ENCODE measurements at regions of chr13 and their contacts with region 1.

Region 1: DNA sequence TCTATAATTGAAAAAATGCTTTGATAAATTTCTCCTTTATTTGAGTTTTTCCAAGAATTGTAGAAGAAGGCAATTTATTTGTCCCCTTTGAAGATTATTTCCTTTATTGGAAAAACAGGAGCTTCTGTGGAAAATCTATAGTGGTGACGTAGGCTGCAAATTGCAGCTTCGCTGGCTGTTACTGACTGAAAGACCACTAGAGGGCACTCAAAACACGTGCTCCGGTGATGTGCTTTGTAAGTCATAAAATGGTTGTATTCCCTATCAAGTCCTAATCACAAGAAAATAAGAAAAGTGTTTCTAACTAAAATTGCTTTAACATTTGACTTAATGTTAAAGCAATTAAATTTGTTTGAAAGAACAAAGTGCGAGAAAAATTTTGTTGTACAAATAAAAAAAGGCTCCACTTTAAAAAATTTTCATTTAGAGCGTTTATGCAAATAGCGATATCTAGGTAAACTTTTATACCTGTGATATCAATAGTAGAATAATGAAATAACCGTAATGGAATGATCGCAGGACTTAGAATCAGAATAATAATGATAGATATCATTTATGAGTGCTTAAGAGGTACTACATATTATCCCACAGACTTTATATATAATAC is 638.2 kb upstream of the SPRY2 start:
- DNase-seq: peak in 9 of 10 donors; percentile 25 to 69 (median 50)
- H3K4me3 ChIP-seq: no peak overlapping the region
- H3K27ac ChIP-seq: no peak overlapping the region
- H3K27me3 ChIP-seq: no peaks in the 10 kb centered on the region
- CTCF ChIP-seq: peak; percentile 61 to 98 (median 84)

Region 2: GRCh38 chr13:80873589-80873988 is 105.5 kb before region 1 on chr13:
- intact Hi-C with region 1: no loop called
- DNase-seq: no peak
- H3K4me3 ChIP-seq: no peak overlapping the region
- H3K27ac ChIP-seq: no peak overlapping the region
- H3K27me3 ChIP-seq: no peaks in the 10 kb centered on the region
- CTCF ChIP-seq: no peak

Region 3: DNA sequence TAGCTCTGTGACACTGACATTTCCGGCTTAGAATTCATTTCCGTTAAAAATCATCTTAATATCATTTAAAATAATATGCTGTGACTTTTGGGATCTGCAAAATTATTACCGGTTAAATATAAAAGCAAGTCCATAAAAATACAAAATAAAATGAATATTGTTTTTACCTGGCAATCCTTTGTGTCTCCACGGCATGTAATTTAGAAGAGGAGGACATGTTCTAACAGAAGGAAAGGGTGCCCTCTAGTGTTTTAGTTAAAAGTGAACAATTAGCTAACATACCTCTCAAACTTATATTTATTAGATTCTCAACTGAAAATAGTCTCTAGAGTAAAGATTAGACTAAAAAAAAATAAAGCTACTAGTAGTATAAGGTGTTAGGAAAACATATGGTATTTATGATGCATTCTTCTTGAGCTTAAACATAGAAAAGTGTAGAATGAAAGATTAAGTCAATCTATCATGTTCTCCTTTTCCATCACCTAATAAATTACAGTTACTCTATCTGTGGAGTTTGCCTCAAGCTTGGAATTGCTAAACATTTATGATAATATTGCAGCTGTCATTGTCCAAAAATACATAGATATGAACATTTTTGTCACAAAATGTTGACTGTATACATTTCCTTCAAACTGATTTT is 38.5 kb after region 1 on chr13:
- intact Hi-C with region 1: loop called (anchors 2 to 5 kb)
- DNase-seq: no peak
- H3K4me3 ChIP-seq: peak overlapping the region in 54 of 59 donors; percentile 3 to 63 (median 44)
- H3K27ac ChIP-seq: peak overlapping the region in 1 of 59 donors; percentile 58
- H3K27me3 ChIP-seq: no peaks in the 10 kb centered on the region
- CTCF ChIP-seq: peak; percentile 4 to 87 (median 74)

Region 4: GRCh38 chr13:81058916-81059290 is 79.8 kb after region 1 on chr13:
- intact Hi-C with region 1: no loop called
- DNase-seq: no peak
- H3K4me3 ChIP-seq: no peak overlapping the region
- H3K27ac ChIP-seq: no peak overlapping the region
- H3K27me3 ChIP-seq: no peaks in the 10 kb centered on the region
- CTCF ChIP-seq: no peak

Region 5: DNA sequence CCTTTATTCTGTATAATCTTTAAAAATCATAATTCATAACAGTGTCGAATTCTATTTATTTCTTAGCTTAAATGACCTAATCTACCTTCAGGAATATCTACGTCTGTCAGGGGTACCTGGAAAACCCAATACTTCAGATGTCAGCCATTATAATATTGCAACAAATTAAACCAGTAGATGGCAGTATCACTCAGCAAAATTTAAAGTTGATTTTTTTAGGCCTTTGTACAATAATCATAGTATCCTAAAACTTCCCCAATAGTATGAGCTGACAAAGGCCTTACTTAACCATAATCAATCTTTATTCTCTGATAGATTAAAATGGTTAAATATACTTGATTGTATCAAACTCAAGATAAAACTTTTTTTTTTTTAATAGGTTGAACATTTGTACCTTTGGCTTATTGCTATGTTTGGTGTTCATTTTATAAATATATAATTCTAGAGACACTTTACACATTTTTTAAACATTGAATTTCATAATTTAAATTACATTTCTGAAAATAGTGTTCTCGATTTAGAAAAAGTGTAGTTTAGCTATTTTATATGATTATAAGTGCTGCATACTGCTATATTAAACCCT is 192.0 kb after region 1 on chr13:
- intact Hi-C with region 1: no loop called
- DNase-seq: no peak
- H3K4me3 ChIP-seq: no peak overlapping the region
- H3K27ac ChIP-seq: no peak overlapping the region
- H3K27me3 ChIP-seq: no peaks in the 10 kb centered on the region
- CTCF ChIP-seq: peak; percentile 45 to 90 (median 72)